Right ventricle myocardium superior (tissue), 1 donor: ENCODE measurements at regions of chr1 and their contacts with region 1.

Region 1: DNA sequence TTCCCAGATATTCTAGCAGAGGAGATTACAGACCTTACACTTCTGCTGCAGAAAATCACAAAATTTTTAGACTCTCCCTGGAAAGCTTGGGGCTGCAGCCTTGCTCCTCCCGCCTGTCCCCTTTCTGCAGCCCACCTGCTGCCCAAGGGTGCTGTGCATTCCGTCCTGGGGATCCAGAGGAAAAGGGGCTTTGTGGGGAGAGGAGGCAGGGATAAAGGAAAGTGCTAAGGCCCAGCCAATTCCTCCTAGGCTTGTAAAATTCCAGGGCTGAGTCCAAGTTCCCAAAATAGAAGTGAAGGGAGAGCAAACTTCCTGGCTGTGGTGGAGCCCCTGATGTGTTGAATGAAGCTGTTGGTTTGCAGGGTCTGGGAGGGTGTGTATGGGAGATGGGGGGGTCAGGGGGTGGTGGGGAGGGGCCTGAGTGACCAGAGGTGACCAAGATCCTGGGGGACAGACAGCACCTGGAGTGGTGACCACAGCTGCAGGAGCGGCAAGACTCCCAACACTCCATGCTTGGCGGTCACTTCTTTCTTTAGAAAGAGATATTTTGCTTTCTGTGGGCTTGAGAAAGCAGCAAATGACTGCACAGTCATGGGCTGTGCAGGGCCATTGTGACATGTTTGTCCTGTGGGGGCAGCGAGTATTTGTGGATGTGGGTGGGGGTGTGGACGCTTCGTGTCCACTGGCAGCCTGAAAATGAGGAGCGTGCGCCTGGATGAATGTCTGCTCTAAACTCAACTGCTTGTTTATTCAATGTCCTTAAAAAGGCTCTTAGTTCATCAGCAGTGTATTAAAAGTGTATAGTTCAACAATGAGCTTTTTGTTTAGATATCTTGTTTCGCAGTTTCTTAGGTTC is 68.4 kb downstream of the TLR5 start:
- DNase-seq: no peak
- ATAC-seq: peak; percentile 65

Region 2: DNA sequence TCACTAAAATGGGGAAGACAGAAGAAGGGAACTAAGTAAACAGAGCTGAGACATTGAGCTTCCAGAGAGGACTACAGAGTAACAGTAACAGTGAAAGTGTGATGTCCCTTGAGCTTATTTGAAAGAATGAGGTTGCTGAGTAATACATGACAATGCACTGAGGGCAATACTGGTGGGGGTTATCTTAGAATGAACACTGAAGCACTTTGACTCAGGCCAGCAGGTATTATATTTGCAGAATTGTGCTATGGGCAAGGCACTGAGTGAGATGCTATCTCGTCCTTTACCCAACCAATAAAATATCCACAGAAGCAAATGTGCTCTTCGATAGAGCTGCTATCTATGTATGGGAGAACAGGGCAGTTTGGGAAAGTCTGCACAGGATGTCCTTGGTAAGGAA is 126.6 kb before region 1 on chr1:
- intact Hi-C with region 1: loop called (anchors 10 kb)
- DNase-seq: no peak
- ATAC-seq: no peak

Region 3: GRCh38 chr1:223001653-223002634 is 72.7 kb before region 1 on chr1:
- intact Hi-C with region 1: loop called (anchors 10 kb)
- DNase-seq: no peak
- ATAC-seq: no peak

Region 4: DNA sequence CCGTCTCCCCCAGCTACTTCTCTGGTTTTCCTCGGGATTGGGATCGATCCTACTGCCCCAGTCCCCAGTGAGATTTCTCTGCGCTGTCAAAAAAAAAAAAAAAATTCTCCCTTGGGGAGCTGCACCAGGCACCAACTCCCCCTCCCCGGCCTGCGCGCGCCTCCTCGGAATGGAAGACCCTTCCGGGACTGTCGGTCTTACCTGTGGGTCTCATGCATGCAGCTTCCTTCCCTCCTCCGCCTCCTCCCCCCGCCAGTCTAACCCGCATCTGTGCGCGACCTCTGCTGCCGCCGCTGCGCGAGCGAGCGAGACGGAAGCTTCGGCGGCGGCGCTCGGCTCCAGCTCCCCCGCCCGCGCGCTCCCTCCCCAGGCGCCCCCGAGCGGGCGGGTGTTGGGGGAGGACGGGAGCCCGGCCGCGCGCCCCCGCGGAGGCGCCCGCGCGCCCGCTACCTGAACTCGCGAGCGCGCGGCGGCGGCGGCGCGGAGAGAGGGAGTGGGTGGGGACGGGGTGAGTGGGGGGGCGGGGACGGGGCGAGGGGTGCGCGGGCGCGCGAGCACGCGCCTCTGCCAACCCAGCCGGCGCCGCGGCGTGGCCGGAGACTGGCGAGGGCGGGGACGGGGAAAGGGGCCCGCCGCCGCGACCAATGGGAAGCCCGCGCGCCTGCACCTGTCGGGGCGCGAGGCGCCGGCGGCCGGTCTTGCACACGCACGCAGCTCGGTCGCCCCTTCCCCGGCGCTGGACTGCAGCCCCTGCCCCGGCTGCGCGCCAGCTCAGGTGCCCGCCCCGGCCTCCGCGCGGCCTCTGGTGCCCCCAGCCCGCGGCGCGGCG is 289.4 kb after region 1 on chr1 and contains the start of gene SUSD4:
- intact Hi-C with region 1: no loop called
- DNase-seq: peak; percentile 68
- ATAC-seq: peak; percentile 86
- total RNA-seq, gene SUSD4: 5.8 TPM